H1 (cell line): ENCODE measurements at regions of chr18 and their contacts with region 1.

Region 1: GRCh38 chr18:48428475-48429177 is 19.4 kb upstream of the ZBTB7C start:
- DNase-seq: no peak
- H3K4me3 ChIP-seq: no peak overlapping the region
- H3K27ac ChIP-seq: no peak overlapping the region
- H3K4me1 ChIP-seq: 0 out of 7 replicates have a peak, but pooled peaks cover 0 to 2% (median 0%) of the 10 kb centered on the region in 4 experiments
- H3K27me3 ChIP-seq: peaks cover 0 to 15% (median 3%) of the 10 kb centered on the region in 4 experiments; a peak in 4 of 7 replicates
- CTCF ChIP-seq: no peak
- EP300 ChIP-seq: no peak
- POLR2A ChIP-seq: no peak
- RAD21 ChIP-seq: no peak

Region 2: DNA sequence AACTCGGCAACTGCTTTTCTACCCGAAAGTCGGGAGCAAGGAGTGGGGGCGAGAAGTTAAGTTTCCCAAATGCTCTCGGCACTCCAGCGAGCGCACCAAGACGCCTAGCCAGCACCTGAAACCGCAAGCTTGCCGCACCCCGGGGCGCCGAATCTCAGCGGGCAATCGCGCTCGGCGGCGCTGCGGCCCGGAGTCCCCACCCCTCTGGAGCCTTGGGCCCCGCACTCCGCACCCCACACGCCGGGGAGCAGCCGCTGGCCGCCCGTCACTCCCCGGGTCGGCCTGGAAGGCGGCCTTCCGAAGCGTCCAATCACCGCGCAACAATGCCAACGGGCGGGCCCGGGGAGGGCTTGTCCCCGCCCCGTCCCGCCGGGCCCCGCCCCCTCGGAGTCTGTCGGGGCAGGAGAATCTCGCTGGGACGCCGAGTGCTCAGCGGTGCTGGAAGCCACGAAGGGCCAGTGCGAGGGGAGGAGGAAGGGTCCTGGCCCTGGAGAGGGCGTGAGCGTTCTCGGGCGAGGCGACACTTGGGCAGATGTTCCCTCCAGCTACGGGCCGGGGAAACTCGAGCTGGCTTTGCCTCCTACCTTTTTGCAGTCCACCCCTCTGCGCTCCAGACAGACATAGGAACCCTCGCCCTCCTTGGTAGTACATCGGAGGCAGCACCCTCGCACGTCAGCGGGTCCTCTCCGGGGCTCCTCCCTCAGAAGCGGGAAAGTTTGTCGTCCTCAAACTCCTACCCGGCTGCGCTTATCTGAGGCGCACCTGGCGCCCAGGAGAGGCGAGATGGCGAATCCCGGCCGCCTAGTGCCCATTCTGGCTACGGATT is 18.3 kb before region 1 on chr18:
- CTCF ChIA-PET with region 1: interaction called, 13 read pairs
- POLR2A ChIA-PET with region 1: no interaction called
- DNase-seq: peak; percentile 57 to 94
- H3K4me3 ChIP-seq: peak overlapping the region; percentile 56 to 78 (median 64)
- H3K27ac ChIP-seq: no peak overlapping the region
- H3K4me1 ChIP-seq: peaks cover 2 to 16% (median 10%) of the 10 kb centered on the region in 4 experiments
- H3K27me3 ChIP-seq: peaks cover 21 to 56% (median 47%) of the 10 kb centered on the region in 4 experiments
- CTCF ChIP-seq: peak in 1 of 3 experiments; percentile 17; a peak in 1 of 4 replicates
- EP300 ChIP-seq: no peak
- POLR2A ChIP-seq: no peak
- RAD21 ChIP-seq: peak in 1 of 2 experiments; percentile 19; a peak in 2 of 4 replicates

Region 3: GRCh38 chr18:48563043-48563442 is 134.4 kb after region 1 on chr18:
- CTCF ChIA-PET with region 1: no interaction called
- POLR2A ChIA-PET with region 1: no interaction called
- DNase-seq: no peak
- H3K4me3 ChIP-seq: no peak overlapping the region
- H3K27ac ChIP-seq: no peak overlapping the region
- H3K4me1 ChIP-seq: peaks cover 0 to 2% (median 0%) of the 10 kb centered on the region in 4 experiments; a peak in 4 of 7 replicates
- H3K27me3 ChIP-seq: no peaks in the 10 kb centered on the region
- CTCF ChIP-seq: no peak
- EP300 ChIP-seq: no peak
- POLR2A ChIP-seq: no peak
- RAD21 ChIP-seq: no peak